Activated CD4-positive, alpha-beta T cell treated with anti-CD3 and anti-CD28 coated beads for 36 hours (primary cell): ENCODE measurements at regions of chr12 and their contacts with region 1.

Region 1: DNA sequence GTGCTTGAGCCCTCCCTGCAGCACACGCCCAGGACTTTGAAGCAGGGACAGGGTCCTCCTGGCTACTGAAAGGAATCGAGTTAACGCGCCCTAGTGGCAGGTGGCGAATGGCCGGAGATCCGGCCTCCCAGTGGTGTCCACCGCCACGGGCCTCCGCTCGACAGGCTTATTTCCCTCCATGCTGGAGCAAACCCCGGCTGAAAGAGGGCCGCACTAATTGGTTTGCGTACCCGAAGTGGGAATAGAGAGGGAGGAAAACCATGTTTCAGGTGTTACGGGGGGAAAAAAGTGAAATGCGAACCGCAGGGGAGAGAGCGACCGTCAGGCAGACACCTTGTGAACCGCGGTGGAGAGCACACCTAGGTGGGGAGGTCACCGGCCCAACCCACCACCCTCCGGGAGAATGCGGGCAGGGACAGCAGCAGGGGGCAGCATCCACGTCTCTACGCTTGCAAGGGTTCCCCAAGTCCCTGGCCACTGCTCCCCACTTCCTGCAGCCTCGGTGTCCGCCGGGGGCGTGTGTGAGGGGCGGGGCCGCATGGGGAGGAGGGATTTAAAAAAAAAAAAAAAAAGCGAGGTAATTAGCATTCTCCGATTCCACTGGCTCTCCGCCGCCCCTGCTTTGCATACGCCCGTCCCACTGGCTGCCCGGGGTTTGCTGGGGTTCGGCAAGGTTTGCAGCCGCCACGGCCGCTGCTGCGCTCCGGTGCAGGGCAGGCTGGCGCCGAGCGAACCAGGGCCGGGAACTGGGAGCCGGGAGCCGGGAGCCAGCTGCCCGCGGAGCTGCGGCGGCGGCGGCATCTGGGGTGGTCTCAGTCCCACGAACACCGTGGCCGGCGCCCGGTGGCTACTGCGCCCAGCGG is 224.6 kb upstream of the CRY1 start:
- DNase-seq: peak; percentile 93
- ATAC-seq: peak; percentile 66
- H3K4me3 Mint-ChIP-seq: peak overlapping the region; percentile 86
- H3K27ac Mint-ChIP-seq: no peak overlapping the region
- H3K4me1 Mint-ChIP-seq: peaks cover 27% of the 10 kb centered on the region
- H3K27me3 Mint-ChIP-seq: peaks cover 2% of the 10 kb centered on the region

Region 2: GRCh38 chr12:106955377-106956047 is 362.5 kb before region 1 on chr12 and contains the start of gene TMEM263:
- CTCF ChIA-PET with region 1: no interaction called
- POLR2A ChIA-PET with region 1: no interaction called
- intact Hi-C with region 1: loop called in 1 of 2 experiments (anchors 2 kb)
- DNase-seq: peak; percentile 94
- ATAC-seq: peak; percentile 81
- H3K4me3 Mint-ChIP-seq: peak within 1 kb of the TSS; percentile 100
- H3K27ac Mint-ChIP-seq: peak within 1 kb of the TSS; percentile 98
- H3K4me1 Mint-ChIP-seq: peaks cover 23% of the 10 kb centered on the region
- H3K27me3 Mint-ChIP-seq: no peaks in the 10 kb centered on the region
- total RNA-seq, gene TMEM263: 38.9 to 43.0 TPM

Region 3: GRCh38 chr12:107328442-107329133 is 10.6 kb after region 1 on chr12:
- CTCF ChIA-PET with region 1: interaction called, 5 read pairs
- POLR2A ChIA-PET with region 1: interaction called, 4 read pairs
- intact Hi-C with region 1: loop called (anchors 1 kb)
- DNase-seq: peak; percentile 49
- ATAC-seq: peak; percentile 10
- H3K4me3 Mint-ChIP-seq: no peak overlapping the region
- H3K27ac Mint-ChIP-seq: no peak overlapping the region
- H3K4me1 Mint-ChIP-seq: peaks cover 77% of the 10 kb centered on the region
- H3K27me3 Mint-ChIP-seq: peaks cover 2% of the 10 kb centered on the region

Region 4: DNA sequence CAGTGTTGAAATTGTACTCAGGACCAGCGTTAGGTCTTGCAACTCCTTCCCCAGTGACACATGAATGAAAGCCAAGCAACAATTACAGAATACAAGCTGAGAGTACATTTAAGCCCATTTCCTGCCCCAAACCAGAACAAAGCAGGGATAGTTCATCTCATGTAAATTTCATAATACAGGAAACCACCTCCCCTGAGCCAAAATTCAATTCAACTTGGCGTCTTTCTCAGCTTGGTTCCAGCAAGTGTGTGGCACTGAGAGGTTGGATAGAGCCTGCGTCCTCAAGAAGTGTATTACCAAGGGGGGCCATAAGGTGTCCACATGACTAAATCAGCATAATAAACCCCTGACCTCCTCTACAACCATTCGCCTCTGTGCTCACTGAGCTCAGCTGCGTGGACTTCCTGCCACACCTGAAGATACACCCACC is 54.3 kb after region 1 on chr12:
- CTCF ChIA-PET with region 1: interaction called, 10 read pairs
- POLR2A ChIA-PET with region 1: interaction called, 3 read pairs
- intact Hi-C with region 1: loop called (anchors 1 kb)
- DNase-seq: peak; percentile 52
- ATAC-seq: peak; percentile 52
- H3K4me3 Mint-ChIP-seq: peak overlapping the region; percentile 10
- H3K27ac Mint-ChIP-seq: peak overlapping the region; percentile 99
- H3K4me1 Mint-ChIP-seq: peaks cover 80% of the 10 kb centered on the region
- H3K27me3 Mint-ChIP-seq: no peaks in the 10 kb centered on the region

Region 5: DNA sequence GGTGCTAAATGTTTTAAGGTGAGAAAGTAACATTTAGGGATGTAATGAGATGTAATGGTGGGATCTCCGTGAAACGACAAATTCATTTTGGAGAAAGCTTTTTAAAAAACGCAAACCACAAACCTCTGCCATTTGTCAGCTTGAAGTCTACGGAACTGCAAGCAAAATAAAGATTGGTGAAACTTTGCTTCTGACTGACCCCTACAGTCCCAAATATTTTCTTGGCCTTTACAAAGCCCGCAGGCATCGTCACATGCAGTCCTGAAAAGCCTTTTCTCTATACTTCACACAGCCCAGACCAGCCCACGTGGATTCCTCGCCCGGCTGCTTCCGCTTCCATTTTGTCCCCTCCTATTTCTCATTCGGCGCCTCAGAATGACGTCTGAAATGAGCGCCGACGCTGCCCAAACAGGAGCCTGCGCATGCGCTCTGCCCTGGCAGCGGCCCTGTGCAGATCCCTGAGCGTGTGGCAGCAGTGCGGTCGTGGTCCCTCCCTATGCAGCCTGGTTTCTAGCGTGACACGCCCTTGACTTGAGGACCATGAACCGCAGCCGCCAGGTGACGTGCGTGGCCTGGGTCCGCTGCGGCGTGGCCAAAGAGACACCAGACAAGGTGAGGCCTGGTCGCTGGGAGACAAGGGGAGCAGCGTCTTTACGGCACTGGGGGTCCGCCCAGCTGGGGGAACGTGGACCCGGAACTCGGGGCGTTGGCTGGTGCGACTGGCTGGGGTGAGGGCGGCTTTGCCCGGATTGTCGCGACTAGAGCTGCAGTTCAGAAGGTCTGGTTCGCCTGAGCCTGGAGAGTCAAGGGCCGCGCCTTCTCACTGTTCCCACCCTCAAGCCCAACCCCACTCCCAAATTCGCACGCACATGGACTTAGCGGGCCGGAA is 367.6 kb after region 1 on chr12 and contains the start of gene PWP1:
- CTCF ChIA-PET with region 1: no interaction called
- POLR2A ChIA-PET with region 1: no interaction called
- intact Hi-C with region 1: loop called in 1 of 2 experiments (anchors 1 kb)
- DNase-seq: peak; percentile 97
- ATAC-seq: peak; percentile 92
- H3K4me3 Mint-ChIP-seq: peak within 1 kb of the TSS; percentile 94
- H3K27ac Mint-ChIP-seq: peak within 1 kb of the TSS; percentile 94
- H3K4me1 Mint-ChIP-seq: peaks cover 27% of the 10 kb centered on the region
- H3K27me3 Mint-ChIP-seq: no peaks in the 10 kb centered on the region
- total RNA-seq, gene PWP1: 59.5 to 60.0 TPM